SK-N-SH (cell line): ENCODE measurements at regions of chr7 and their contacts with region 1.

Region 1: GRCh38 chr7:93622036-93623033 is 47.8 kb upstream of the CALCR start:
- DNase-seq: peak; percentile 32
- H3K4me3 ChIP-seq: no peak overlapping the region; a peak in 1 of 4 replicates
- H3K27ac ChIP-seq: no peak overlapping the region; a peak in 1 of 4 replicates
- H3K4me1 ChIP-seq: peaks cover 0 to 3% of the 10 kb centered on the region in 2 experiments; a peak in 2 of 4 replicates
- H3K27me3 ChIP-seq: no peaks in the 10 kb centered on the region
- CTCF ChIP-seq: peak; percentile 54
- EP300 ChIP-seq: no peak
- RAD21 ChIP-seq: peak; percentile 73

Region 2: GRCh38 chr7:93574646-93575554 is 47.4 kb before region 1 on chr7 and contains the start of gene CALCR:
- CTCF ChIA-PET with region 1: interaction called, 11 read pairs
- POLR2A ChIA-PET with region 1: no interaction called
- DNase-seq: peak; percentile 71
- H3K4me3 ChIP-seq: peak within 1 kb of the TSS in 1 of 2 experiments; percentile 33; a peak in 2 of 4 replicates
- H3K27ac ChIP-seq: no peak within 1 kb of the TSS
- H3K4me1 ChIP-seq: peaks cover 0 to 12% of the 10 kb centered on the region in 2 experiments; a peak in 1 of 4 replicates
- H3K27me3 ChIP-seq: peaks cover 28% of the 10 kb centered on the region
- CTCF ChIP-seq: no peak
- EP300 ChIP-seq: no peak
- RAD21 ChIP-seq: no peak
- polyA plus RNA-seq, gene CALCR: 0.06 and 0.12 TPM in 2 replicates

Region 3: DNA sequence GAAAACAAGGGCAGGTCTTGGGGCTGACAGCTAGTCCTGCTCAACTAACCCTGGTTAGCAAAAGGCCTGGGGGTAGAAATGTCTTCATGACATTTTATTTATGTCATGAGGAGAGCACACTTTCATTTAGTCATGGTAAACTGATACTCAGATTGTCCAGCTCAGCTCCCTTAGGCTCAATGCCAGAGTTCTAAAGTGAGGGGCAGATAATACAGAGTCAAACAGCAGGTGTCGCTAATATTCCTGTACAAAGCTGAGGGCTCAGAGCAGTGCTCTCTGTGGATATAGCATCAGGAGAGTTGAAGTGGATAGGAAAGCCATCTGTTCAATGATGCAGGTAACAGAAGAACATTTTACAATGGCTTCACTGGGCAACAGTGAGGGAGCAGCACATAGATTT is 21.0 kb before region 1 on chr7:
- CTCF ChIA-PET with region 1: interaction called, 47 read pairs
- POLR2A ChIA-PET with region 1: no interaction called
- DNase-seq: no peak
- H3K4me3 ChIP-seq: no peak overlapping the region
- H3K27ac ChIP-seq: no peak overlapping the region
- H3K4me1 ChIP-seq: no peaks in the 10 kb centered on the region
- H3K27me3 ChIP-seq: no peaks in the 10 kb centered on the region
- CTCF ChIP-seq: no peak; the same call in 1 of the 2 replicates
- EP300 ChIP-seq: no peak
- RAD21 ChIP-seq: no peak

Region 4: DNA sequence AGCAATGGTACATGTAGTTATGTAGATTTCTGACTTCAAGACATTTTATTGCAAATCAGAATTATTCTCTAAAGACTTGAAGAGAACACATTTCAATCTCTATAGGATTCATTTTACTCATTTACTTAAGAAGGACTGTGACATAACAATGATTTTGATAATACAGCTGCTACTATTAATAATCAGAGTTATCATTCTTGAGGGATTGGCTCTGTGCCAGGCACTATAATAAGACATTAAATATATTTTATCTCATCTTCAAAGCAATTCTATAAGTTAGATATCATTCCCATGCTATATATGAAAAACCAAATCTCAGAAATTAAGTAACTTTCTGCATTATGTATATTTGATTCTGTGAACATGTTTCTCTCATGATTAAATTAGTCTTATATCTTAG is 55.9 kb after region 1 on chr7:
- CTCF ChIA-PET with region 1: no interaction called
- POLR2A ChIA-PET with region 1: no interaction called
- DNase-seq: no peak
- H3K4me3 ChIP-seq: no peak overlapping the region
- H3K27ac ChIP-seq: no peak overlapping the region
- H3K4me1 ChIP-seq: no peaks in the 10 kb centered on the region; a peak in 1 of 4 replicates
- H3K27me3 ChIP-seq: no peaks in the 10 kb centered on the region
- CTCF ChIP-seq: no peak
- EP300 ChIP-seq: no peak
- RAD21 ChIP-seq: no peak

Region 5: DNA sequence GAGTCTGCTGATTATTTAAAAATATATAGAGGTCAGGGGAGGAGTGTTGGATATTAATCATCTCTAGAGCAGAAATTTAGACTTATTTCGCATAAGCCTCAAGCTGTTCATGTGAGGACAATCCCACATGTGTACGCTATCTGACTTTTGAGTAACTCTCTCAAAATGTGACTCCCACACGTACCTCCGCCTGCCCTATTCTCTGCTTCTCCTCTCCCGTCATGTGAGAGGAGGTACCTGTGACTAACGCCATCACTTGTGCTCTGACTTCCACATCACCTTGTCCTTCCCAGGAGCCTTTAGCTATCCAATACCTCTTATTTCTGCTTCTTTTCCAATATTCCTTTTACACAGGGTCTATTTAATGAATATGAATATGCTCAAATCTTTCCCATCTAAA is 71.5 kb after region 1 on chr7:
- CTCF ChIA-PET with region 1: interaction called, 11 read pairs
- POLR2A ChIA-PET with region 1: no interaction called
- DNase-seq: no peak
- H3K4me3 ChIP-seq: no peak overlapping the region
- H3K27ac ChIP-seq: no peak overlapping the region
- H3K4me1 ChIP-seq: no peaks in the 10 kb centered on the region
- H3K27me3 ChIP-seq: no peaks in the 10 kb centered on the region
- CTCF ChIP-seq: no peak
- EP300 ChIP-seq: no peak
- RAD21 ChIP-seq: no peak

Region 6: DNA sequence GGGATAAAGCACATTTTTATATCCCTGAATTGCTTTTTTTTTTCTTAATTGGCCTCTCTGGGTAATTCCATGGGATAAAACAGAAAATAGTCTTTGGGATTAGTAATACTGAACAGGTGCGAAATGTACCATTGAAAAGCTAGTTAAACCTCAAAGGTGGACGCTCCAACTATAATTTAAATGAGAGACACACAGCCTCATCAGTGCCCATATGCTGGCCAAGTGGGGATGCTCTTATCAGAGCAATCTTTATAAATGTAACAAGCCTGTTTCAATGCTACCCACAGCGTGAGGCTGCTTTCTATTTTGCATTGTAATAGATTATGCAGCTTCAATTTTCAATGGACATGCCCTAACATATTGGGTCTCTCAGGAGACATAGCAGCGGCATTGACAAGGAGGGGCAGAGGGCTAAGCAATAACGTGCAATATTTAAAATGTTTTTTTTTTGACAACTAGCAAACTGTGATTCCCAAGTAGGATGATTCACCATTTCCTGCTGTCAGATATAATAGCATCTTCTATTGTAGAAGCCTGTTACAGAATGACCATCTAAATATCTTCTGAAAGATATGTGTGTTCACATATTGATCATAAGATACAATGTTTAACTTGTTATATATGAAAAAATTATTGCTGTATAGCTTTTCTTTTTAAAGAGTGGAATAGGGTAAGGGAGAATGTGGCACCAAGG is 473.1 kb after region 1 on chr7:
- CTCF ChIA-PET with region 1: interaction called, 12 read pairs
- POLR2A ChIA-PET with region 1: no interaction called
- DNase-seq: no peak
- H3K4me3 ChIP-seq: no peak overlapping the region
- H3K27ac ChIP-seq: peak overlapping the region; percentile 47 to 52; a peak in 3 of 4 replicates
- H3K4me1 ChIP-seq: peaks cover 4 to 6% of the 10 kb centered on the region in 2 experiments; a peak in 3 of 4 replicates
- H3K27me3 ChIP-seq: no peaks in the 10 kb centered on the region
- CTCF ChIP-seq: no peak
- EP300 ChIP-seq: peak; percentile 19 to 77; a peak in 2 of 4 replicates
- RAD21 ChIP-seq: no peak

Region 7: GRCh38 chr7:94276795-94277194 is 654.5 kb after region 1 on chr7:
- CTCF ChIA-PET with region 1: interaction called, 20 read pairs
- POLR2A ChIA-PET with region 1: no interaction called
- DNase-seq: peak; percentile 37
- H3K4me3 ChIP-seq: no peak overlapping the region
- H3K27ac ChIP-seq: peak overlapping the region in 1 of 2 experiments; percentile 94; a peak in 3 of 4 replicates
- H3K4me1 ChIP-seq: peaks cover 0 to 16% of the 10 kb centered on the region in 2 experiments; a peak in 2 of 4 replicates
- H3K27me3 ChIP-seq: no peaks in the 10 kb centered on the region
- CTCF ChIP-seq: peak; percentile 58
- EP300 ChIP-seq: peak in 1 of 2 experiments; percentile 54; a peak in 2 of 4 replicates
- RAD21 ChIP-seq: peak; percentile 92